Activated CD4-positive, alpha-beta T cell treated with anti-CD3 and anti-CD28 coated beads, Interleukin-2, amount 10 ng/mL, durations not matched to agents 7 days and 5 days (primary cell): ENCODE measurements at regions of chr15 and their contacts with region 1.

Region 1: DNA sequence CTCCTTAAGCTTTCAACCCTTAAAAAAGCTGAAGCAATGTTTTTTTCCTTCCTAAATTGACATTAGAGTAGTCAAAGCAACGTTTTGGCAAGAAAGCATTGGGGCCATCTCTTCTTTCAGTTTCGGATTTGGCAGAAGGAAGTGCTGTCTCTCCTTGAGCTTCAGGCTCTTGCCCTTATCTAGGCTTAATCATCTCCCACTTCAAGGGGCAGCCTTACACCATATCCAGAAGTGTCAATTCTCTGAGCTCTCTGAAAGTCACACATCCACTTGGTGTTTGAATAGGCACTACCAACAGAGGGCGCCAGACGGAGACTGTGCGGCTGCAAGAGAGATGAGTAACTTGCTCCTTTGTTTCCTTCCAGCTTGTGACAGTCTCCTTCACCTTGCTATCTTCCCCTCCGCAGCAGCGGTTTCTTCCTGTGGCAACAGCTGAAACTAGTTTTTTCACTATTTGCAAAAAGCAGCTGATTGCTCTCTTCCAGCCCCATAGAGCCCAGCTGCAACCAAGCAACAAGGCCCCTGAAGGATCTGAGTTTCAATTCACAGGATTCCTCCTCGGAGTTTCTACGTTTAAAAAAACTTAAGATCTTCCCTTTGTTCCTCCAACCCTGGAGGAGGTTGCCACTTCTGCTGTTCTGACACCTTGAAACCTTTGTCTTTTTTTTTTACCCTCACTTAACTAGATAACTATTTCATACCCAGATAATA is 147.0 kb upstream of the SLCO3A1 start:
- DNase-seq: peak; percentile 95
- H3K4me3 Mint-ChIP-seq: peak overlapping the region; percentile 17
- H3K27ac Mint-ChIP-seq: peak overlapping the region; percentile 90
- H3K4me1 Mint-ChIP-seq: peaks cover 27% of the 10 kb centered on the region
- H3K27me3 Mint-ChIP-seq: peaks cover 20% of the 10 kb centered on the region

Region 2: GRCh38 chr15:91694831-91695210 is 11.7 kb before region 1 on chr15:
- CTCF ChIA-PET with region 1: interaction called, 30 read pairs
- POLR2A ChIA-PET with region 1: no interaction called
- DNase-seq: no peak
- H3K4me3 Mint-ChIP-seq: no peak overlapping the region
- H3K27ac Mint-ChIP-seq: no peak overlapping the region
- H3K4me1 Mint-ChIP-seq: no peaks in the 10 kb centered on the region
- H3K27me3 Mint-ChIP-seq: no peaks in the 10 kb centered on the region

Region 3: DNA sequence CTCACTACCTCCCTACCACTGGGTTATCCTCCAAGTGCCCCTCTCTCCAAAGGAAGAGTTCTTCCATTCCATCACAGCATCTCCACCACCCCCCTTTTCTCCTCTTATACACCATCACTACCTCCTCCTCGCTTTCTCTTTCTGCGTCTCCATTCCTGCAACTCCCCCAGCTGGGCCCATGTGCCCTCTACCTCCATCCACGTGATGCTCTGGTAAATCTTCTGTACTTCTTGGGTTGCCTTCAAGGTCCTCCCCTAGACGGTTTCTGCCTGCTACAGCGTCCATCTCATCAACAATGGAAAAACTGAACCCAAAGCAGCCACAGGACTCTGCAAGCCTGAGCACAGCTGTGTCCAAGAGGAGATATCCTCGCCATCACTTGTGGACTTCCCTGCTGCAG is 17.5 kb after region 1 on chr15:
- CTCF ChIA-PET with region 1: interaction called, 10 read pairs
- POLR2A ChIA-PET with region 1: no interaction called
- DNase-seq: no peak
- H3K4me3 Mint-ChIP-seq: no peak overlapping the region
- H3K27ac Mint-ChIP-seq: no peak overlapping the region
- H3K4me1 Mint-ChIP-seq: no peaks in the 10 kb centered on the region
- H3K27me3 Mint-ChIP-seq: peaks cover 35% of the 10 kb centered on the region

Region 4: GRCh38 chr15:91821476-91821875 is 115.0 kb after region 1 on chr15:
- CTCF ChIA-PET with region 1: no interaction called
- POLR2A ChIA-PET with region 1: no interaction called
- DNase-seq: no peak
- H3K4me3 Mint-ChIP-seq: no peak overlapping the region
- H3K27ac Mint-ChIP-seq: no peak overlapping the region
- H3K4me1 Mint-ChIP-seq: no peaks in the 10 kb centered on the region
- H3K27me3 Mint-ChIP-seq: peaks cover 15% of the 10 kb centered on the region